ENCODE measurements at regions of chr9 and their contacts with region 1.

Region 1: DNA sequence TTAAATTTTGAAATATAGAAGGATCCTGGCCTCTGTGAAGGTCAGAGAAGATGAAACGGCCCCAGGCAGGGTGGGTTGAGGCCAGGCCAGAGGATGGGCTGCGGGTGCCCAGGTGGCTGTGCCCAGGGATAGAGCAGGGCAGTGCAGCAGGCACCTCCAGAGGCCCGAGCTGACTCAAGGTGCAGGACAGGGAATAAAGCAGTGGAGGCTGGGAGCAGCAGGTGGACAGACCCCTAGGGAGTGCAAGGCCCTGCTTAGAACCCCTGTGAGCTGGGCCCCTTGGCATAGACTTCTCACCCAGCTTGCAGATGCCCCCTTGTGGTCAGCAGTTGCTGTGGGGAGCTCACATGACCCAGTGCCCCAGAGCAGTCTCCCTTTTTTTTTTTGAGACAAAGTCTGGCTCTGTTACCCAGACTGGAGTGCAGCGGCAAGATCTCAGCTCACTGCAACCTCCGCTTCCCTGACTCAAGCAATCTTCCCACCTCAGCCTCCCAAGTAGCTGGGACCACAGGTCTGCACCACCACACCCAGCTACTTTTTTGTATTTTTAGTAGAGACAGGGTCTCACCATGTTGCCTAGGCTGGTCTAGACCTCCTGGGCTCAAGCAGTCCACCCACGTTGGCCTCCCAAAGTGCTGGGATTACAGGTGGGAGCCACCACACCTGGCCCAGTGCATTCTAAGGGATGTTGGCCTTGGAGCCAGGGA is 118.8 kb downstream of the WNK2 start:
- DNase-seq: peak; percentile 36 to 82 (median 58)
- ATAC-seq: peak; percentile 91
- H3K4me3 ChIP-seq: no peak overlapping the region
- H3K4me3 Mint-ChIP-seq: no peak overlapping the region
- H3K27ac ChIP-seq: no peak overlapping the region
- H3K27ac Mint-ChIP-seq: no peak overlapping the region
- H3K4me1 ChIP-seq: peaks cover 8% of the 10 kb centered on the region
- H3K4me1 Mint-ChIP-seq: peaks cover 2% of the 10 kb centered on the region
- H3K27me3 ChIP-seq: no peaks in the 10 kb centered on the region
- H3K27me3 Mint-ChIP-seq: no peaks in the 10 kb centered on the region
- CTCF ChIP-seq: peak; percentile 59

Region 2: GRCh38 chr9:92850884-92851283 is 451.8 kb before region 1 on chr9:
- CTCF ChIA-PET with region 1: no interaction called
- POLR2A ChIA-PET with region 1: no interaction called
- intact Hi-C with region 1: loop called in 1 of 2 experiments (anchors 10 kb)
- DNase-seq: peak in 4 of 14 experiments; percentile 6 to 50 (median 38)
- ATAC-seq: peak; percentile 64
- H3K4me3 ChIP-seq: no peak overlapping the region
- H3K4me3 Mint-ChIP-seq: no peak overlapping the region
- H3K27ac ChIP-seq: no peak overlapping the region
- H3K27ac Mint-ChIP-seq: peak overlapping the region; percentile 19
- H3K4me1 ChIP-seq: peaks cover 3% of the 10 kb centered on the region
- H3K4me1 Mint-ChIP-seq: peaks cover 17% of the 10 kb centered on the region
- H3K27me3 ChIP-seq: no peaks in the 10 kb centered on the region
- H3K27me3 Mint-ChIP-seq: no peaks in the 10 kb centered on the region
- CTCF ChIP-seq: peak; percentile 57

Region 3: GRCh38 chr9:93159601-93160471 is 142.9 kb before region 1 on chr9:
- CTCF ChIA-PET with region 1: interaction called, 3 read pairs
- POLR2A ChIA-PET with region 1: no interaction called
- intact Hi-C with region 1: loop called (anchors 1 kb)
- DNase-seq: peak; percentile 41 to 81 (median 63)
- ATAC-seq: peak; percentile 89
- H3K4me3 ChIP-seq: no peak overlapping the region
- H3K4me3 Mint-ChIP-seq: no peak overlapping the region
- H3K27ac ChIP-seq: no peak overlapping the region
- H3K27ac Mint-ChIP-seq: no peak overlapping the region
- H3K4me1 ChIP-seq: peaks cover 15% of the 10 kb centered on the region
- H3K4me1 Mint-ChIP-seq: peaks cover 14% of the 10 kb centered on the region
- H3K27me3 ChIP-seq: no peaks in the 10 kb centered on the region
- H3K27me3 Mint-ChIP-seq: no peaks in the 10 kb centered on the region
- CTCF ChIP-seq: peak; percentile 96

Region 4: GRCh38 chr9:94002316-94003140 is 699.8 kb after region 1 on chr9:
- CTCF ChIA-PET with region 1: no interaction called
- POLR2A ChIA-PET with region 1: no interaction called
- intact Hi-C with region 1: no loop called
- DNase-seq: peak in 3 of 14 experiments; percentile 26 to 44 (median 40)
- ATAC-seq: no peak
- H3K4me3 ChIP-seq: no peak overlapping the region
- H3K4me3 Mint-ChIP-seq: no peak overlapping the region
- H3K27ac ChIP-seq: no peak overlapping the region
- H3K27ac Mint-ChIP-seq: no peak overlapping the region
- H3K4me1 ChIP-seq: no peaks in the 10 kb centered on the region
- H3K4me1 Mint-ChIP-seq: no peaks in the 10 kb centered on the region
- H3K27me3 ChIP-seq: peaks cover 4 to 15% of the 10 kb centered on the region in 2 experiments
- H3K27me3 Mint-ChIP-seq: peaks cover 11% of the 10 kb centered on the region
- CTCF ChIP-seq: peak; percentile 29